ENCODE measurements at regions of chr11 and their contacts with region 1.

Region 1: GRCh38 chr11:61516675-61517572 is 8.4 kb downstream of the LRRC10B start:
- DNase-seq: peak; percentile 42
- H3K4me3 ChIP-seq: no peak overlapping the region
- H3K27ac ChIP-seq: no peak overlapping the region
- H3K4me1 ChIP-seq: peaks cover 4% of the 10 kb centered on the region
- H3K27me3 ChIP-seq: no peaks in the 10 kb centered on the region
- CTCF ChIP-seq: peak; percentile 96 to 97
- POLR2A ChIP-seq: no peak

Region 2: DNA sequence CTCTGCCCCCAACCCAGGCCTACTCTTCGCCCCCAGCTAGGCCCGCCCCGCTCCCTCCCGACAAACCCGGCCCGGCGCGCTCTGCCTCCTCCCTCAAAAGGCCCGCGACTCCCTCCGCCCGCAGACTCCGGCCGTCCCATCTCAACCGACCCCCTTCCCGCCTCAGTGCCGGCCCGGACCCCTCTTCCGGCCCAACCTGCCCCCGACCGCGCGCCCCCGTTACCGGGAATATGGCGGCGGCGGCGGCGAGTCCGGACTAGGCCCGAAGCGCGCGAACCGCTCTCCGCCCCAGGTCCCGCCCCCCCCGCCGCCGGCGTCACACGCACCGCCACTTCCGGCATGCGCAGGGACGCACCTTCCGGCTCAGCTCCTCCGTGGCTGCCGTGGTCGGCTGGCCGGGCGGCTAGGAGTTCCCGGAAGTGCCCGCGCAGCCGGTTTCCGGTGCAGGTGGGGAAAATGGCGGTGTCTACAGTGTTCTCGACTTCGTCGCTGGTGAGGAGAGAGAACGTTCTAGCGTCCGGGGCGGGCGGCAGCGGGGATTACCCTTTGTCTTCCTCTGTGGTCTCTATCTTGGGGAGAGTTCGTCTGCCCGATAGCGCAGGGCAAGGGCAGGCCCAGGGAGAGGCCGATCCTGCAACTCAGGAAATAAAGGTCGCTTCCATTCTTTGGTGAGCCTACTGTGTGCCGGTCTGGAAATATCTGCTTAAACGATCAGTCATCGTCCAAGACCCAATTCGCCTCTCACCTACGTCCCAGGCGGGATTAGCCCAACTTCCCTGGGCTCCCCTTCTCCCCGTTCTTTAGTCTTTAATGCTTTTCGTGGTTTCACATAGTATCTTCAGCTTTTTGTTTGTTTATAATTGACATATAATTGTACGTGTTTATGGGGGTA is 87.0 kb before region 1 on chr11 and contains the starts of genes CPSF7 and SDHAF2:
- CTCF ChIA-PET with region 1: interaction called, 10 read pairs
- POLR2A ChIA-PET with region 1: no interaction called
- dilution Hi-C with region 1: no loop called
- intact Hi-C with region 1: no loop called
- DNase-seq: peak; percentile 94
- H3K4me3 ChIP-seq: peak within 1 kb of the TSS; percentile 87 to 100 (median 100)
- H3K27ac ChIP-seq: peak within 1 kb of the TSS; percentile 99
- H3K4me1 ChIP-seq: peaks cover 20% of the 10 kb centered on the region
- H3K27me3 ChIP-seq: no peaks in the 10 kb centered on the region
- CTCF ChIP-seq: no peak
- POLR2A ChIP-seq: peak; percentile 91
- total RNA-seq, gene CPSF7: 77.0 and 78.2 TPM in 2 replicates
- total RNA-seq, gene SDHAF2: 40.3 and 44.5 TPM in 2 replicates

Region 3: DNA sequence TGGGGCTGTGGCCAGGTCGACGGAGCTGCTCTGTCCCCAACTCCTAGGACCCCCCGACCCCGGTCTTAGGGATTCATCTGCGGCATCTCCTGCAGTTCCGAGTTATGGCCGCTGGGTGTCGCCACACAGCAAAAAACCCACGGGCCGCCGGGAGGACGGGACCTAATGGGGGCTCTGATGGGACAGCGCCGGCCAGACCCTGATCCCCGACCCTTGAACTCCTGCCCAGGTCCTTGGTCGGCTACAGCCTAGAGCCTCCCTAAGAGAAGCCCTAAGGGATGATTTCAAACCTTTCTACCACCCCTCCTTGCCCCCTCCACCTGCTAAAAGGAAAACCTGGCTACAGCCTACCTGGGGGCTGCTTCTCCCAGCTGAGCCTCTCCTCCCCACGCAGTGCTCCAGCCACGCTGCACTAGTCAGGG is 39.2 kb before region 1 on chr11:
- CTCF ChIA-PET with region 1: interaction called, 221 read pairs
- POLR2A ChIA-PET with region 1: no interaction called
- dilution Hi-C with region 1: no loop called
- intact Hi-C with region 1: loop called (anchors 1 kb)
- DNase-seq: peak; percentile 39
- H3K4me3 ChIP-seq: no peak overlapping the region
- H3K27ac ChIP-seq: no peak overlapping the region
- H3K4me1 ChIP-seq: no peaks in the 10 kb centered on the region
- H3K27me3 ChIP-seq: no peaks in the 10 kb centered on the region
- CTCF ChIP-seq: peak; percentile 80 to 89
- POLR2A ChIP-seq: no peak

Region 4: DNA sequence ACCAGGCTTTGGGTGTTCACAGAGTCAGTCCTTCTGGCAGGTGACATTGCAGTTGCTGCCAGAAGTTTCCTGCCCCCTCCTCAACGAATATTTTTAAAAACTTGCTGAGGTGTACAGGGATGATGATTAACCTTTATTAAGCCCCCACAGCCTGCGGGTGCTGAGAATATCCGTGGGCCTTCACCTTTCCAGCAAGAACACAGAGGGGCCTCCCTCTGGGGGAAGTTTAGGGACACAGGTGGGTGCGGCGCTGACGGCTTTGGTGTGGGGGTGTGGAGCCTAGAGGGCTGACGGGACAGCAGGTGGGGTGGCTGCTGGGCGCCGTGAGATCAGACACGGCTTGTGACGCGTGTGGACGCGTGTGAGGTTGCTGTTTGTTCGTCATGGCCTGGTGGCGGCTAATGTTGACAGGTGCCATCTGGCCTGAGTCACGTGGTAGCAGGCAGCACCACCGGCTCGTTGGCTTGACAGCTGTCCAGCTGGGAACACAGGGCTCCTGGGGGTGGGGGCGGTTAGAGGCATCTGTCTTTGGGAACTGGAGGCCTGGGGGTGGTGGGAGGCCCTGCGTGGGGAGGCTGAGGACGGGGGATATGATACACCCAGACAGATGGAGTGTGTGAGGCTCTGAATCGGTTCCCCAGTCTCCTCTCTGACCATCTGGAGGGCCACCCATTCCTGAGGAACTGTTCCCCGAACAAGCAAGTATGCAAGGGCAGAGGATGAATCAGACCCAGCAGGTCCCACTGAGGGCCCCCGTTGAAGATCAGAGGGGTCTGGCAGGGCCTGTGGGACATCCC is 20.9 kb before region 1 on chr11:
- CTCF ChIA-PET with region 1: interaction called, 34 read pairs
- POLR2A ChIA-PET with region 1: no interaction called
- dilution Hi-C with region 1: no loop called
- intact Hi-C with region 1: no loop called
- DNase-seq: no peak
- H3K4me3 ChIP-seq: no peak overlapping the region
- H3K27ac ChIP-seq: no peak overlapping the region
- H3K4me1 ChIP-seq: no peaks in the 10 kb centered on the region
- H3K27me3 ChIP-seq: no peaks in the 10 kb centered on the region
- CTCF ChIP-seq: no peak
- POLR2A ChIP-seq: no peak

Region 5: GRCh38 chr11:61532139-61533038 is 15.5 kb after region 1 on chr11:
- CTCF ChIA-PET with region 1: interaction called, 53 read pairs
- POLR2A ChIA-PET with region 1: no interaction called
- dilution Hi-C with region 1: no loop called
- intact Hi-C with region 1: no loop called
- DNase-seq: peak; percentile 25
- H3K4me3 ChIP-seq: no peak overlapping the region
- H3K27ac ChIP-seq: no peak overlapping the region
- H3K4me1 ChIP-seq: no peaks in the 10 kb centered on the region
- H3K27me3 ChIP-seq: no peaks in the 10 kb centered on the region
- CTCF ChIP-seq: peak; percentile 76 to 88
- POLR2A ChIP-seq: no peak

Region 6: DNA sequence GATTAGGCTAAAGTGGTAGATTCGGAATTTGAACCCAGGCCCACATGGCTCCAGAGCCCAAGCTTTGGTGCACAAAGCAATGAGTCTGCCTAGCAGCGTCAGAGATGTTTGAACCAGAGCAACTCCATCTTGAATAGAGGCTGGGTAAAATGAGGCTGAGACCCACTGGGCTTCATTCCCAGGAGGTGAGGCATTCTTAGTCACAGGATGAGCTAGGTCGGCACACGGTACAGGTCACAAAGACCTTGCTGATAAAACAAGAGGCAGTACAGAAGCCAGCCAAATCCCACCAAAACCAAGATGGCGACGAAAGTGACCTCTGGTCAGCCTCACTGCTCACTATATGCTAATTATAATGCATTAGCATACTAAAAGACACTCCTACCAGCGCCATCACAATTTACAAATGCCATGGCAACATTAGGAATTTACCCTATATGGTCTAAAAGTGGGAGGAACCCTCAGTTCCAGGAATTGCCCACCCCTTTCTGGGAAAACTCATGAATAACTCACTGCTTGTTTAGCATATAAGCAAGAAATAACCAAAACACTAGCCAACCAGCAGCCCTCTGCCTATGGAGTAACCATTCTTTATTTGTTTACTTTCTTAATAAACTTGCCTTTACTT is 123.0 kb after region 1 on chr11:
- CTCF ChIA-PET with region 1: interaction called, 15 read pairs
- POLR2A ChIA-PET with region 1: no interaction called
- dilution Hi-C with region 1: no loop called
- intact Hi-C with region 1: no loop called
- DNase-seq: no peak
- H3K4me3 ChIP-seq: no peak overlapping the region
- H3K27ac ChIP-seq: no peak overlapping the region
- H3K4me1 ChIP-seq: no peaks in the 10 kb centered on the region
- H3K27me3 ChIP-seq: no peaks in the 10 kb centered on the region
- CTCF ChIP-seq: no peak
- POLR2A ChIP-seq: no peak